ENCODE measurements at regions of chr4 and their contacts with region 1.

Region 1: GRCh38 chr4:188869581-188869980 is 730.3 kb downstream of the TRIML1 start:
- DNase-seq: no peak
- ATAC-seq: no peak

Region 2: GRCh38 chr4:187387739-187388138 is 1481.8 kb before region 1 on chr4:
- intact Hi-C with region 1: loop called (anchors 5 kb)
- DNase-seq: no peak
- ATAC-seq: no peak